ENCODE measurements at regions of chr7 and their contacts with region 1.

Region 1: DNA sequence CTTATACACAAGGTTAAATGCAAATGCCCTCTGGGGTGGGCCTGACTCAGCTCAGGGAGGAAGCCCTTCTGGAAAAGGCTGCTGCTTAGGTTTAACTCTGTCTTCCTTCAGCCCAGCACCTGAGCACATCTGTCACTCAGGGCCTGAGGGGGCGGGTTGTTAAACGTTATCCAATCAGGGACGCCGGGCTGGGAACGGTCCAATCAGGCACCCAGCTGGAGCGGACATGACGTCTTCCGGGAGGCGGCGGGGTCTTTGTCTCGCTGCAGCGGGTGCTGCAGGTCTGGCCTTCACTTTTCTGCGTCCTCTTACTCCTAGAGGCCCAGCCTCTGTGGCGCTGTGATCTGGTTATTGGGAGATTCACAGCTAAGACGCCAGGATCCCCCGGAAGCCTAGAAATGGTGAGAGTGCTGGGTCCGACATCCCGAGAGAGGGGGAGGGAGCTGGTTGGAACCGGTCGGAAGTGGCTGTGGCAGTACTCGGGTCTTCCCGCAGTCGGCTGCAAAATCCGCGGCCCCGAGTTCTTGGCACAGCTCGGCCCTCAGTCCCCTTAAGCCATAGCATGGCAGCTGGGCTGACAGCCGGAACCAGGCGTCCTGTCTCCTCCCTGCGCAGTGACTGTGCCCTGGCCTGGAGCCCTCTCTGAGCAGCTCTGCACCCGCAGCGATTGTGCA is at the start of gene ZNF138:
- DNase-seq: peak; percentile 93
- ATAC-seq: peak; percentile 99
- H3K4me3 ChIP-seq: peak within 1 kb of the TSS; percentile 72 to 89 (median 76)
- H3K4me3 Mint-ChIP-seq: peak within 1 kb of the TSS; percentile 99
- H3K27ac ChIP-seq: peak within 1 kb of the TSS; percentile 76 to 84
- H3K27ac Mint-ChIP-seq: peak within 1 kb of the TSS; percentile 97
- H3K4me1 ChIP-seq: peaks cover 13 to 14% of the 10 kb centered on the region in 2 donors
- H3K4me1 Mint-ChIP-seq: peaks cover 24% of the 10 kb centered on the region
- H3K27me3 ChIP-seq: no peaks in the 10 kb centered on the region
- H3K27me3 Mint-ChIP-seq: no peaks in the 10 kb centered on the region
- CTCF ChIP-seq: no peak
- total RNA-seq, gene ZNF138: 23.0 and 26.6 TPM in 2 replicates

Region 2: DNA sequence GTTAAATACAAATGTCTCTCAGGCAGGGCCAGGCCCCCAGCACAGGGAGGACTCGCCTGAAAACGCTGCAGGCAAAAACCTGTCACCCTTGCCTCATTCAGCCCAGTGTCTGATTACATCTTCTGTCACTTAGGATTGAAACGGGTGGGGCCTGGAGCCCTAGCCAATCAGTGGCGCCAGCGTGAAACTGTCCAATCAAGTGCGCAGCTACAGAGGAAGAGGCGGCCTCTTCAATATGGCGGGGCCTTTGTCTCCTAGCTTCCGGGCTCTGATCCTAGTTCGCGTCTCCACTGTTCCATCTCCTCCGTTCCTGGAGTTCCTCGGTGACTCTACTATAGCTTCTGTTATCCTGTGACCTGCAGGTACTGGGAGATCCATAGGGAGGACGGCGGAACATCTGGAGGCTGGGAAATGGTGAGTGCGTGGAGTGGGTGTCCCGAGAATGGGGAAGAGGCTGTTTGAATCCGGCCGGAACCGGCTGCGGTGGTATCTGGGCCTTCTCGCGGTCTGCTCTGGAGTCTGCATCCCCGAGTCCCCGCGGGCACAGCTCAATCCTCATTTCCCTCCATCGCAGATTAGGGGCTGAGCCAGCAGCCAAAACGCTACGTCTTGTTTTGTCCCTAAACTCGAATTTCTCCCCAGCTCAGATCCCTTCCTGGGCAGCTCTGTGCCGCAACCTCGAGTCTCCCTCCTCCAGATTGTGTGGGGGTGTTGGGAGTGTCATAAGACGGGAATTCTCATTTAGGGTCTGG is 480.4 kb before region 1 on chr7 and contains the start of gene ZNF736:
- CTCF ChIA-PET with region 1: no interaction called
- POLR2A ChIA-PET with region 1: interaction called, 3 read pairs
- intact Hi-C with region 1: loop called (anchors 1 kb)
- DNase-seq: peak; percentile 92
- ATAC-seq: peak; percentile 100
- H3K4me3 ChIP-seq: peak within 1 kb of the TSS; percentile 76 to 99 (median 92)
- H3K4me3 Mint-ChIP-seq: peak within 1 kb of the TSS; percentile 99
- H3K27ac ChIP-seq: peak within 1 kb of the TSS; percentile 88 to 97
- H3K27ac Mint-ChIP-seq: peak within 1 kb of the TSS; percentile 99
- H3K4me1 ChIP-seq: peaks cover 20 to 31% of the 10 kb centered on the region in 2 donors
- H3K4me1 Mint-ChIP-seq: peaks cover 38% of the 10 kb centered on the region
- H3K27me3 ChIP-seq: no peaks in the 10 kb centered on the region
- H3K27me3 Mint-ChIP-seq: no peaks in the 10 kb centered on the region
- CTCF ChIP-seq: no peak
- total RNA-seq, gene ZNF736: 79.8 and 85.0 TPM in 2 replicates